ENCODE measurements at regions of chr14 and their contacts with region 1.

Region 1: GRCh38 chr14:21860172-21860571 is 186.6 kb upstream of the OR4E1 start:
- DNase-seq: peak; percentile 63
- H3K4me3 Mint-ChIP-seq: peak overlapping the region; percentile 63
- H3K27ac Mint-ChIP-seq: peak overlapping the region; percentile 67
- H3K4me1 Mint-ChIP-seq: peaks cover 12% of the 10 kb centered on the region
- H3K27me3 Mint-ChIP-seq: peaks cover 21% of the 10 kb centered on the region

Region 2: GRCh38 chr14:21802441-21802840 is 57.7 kb before region 1 on chr14:
- CTCF ChIA-PET with region 1: no interaction called
- DNase-seq: no peak
- H3K4me3 Mint-ChIP-seq: no peak overlapping the region
- H3K27ac Mint-ChIP-seq: no peak overlapping the region
- H3K4me1 Mint-ChIP-seq: no peaks in the 10 kb centered on the region
- H3K27me3 Mint-ChIP-seq: peaks cover 7% of the 10 kb centered on the region

Region 3: GRCh38 chr14:21846227-21846885 is 13.8 kb before region 1 on chr14:
- CTCF ChIA-PET with region 1: interaction called, 42 read pairs
- DNase-seq: peak; percentile 83
- H3K4me3 Mint-ChIP-seq: peak overlapping the region; percentile 75
- H3K27ac Mint-ChIP-seq: peak overlapping the region; percentile 89
- H3K4me1 Mint-ChIP-seq: peaks cover 12% of the 10 kb centered on the region
- H3K27me3 Mint-ChIP-seq: peaks cover 34% of the 10 kb centered on the region

Region 4: DNA sequence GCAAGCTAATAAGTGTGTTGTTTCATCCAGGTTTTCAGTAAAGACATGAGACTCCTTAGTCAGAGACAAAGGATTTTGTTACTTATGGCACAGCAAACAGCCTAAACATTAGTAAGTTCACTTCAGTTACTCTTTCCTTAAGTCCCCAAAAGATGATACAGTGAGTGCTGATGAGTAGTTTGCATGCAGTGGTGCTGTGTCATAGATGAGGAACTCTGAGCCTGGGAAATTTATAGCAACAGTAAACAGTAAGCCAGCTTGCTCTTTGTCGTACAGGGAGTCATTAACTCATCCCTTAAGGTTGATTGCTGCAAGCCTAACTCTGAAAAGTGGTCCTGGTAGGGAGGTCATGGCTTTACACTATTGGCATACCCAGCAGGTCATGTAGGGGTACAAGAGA is 22.1 kb after region 1 on chr14:
- CTCF ChIA-PET with region 1: no interaction called
- DNase-seq: no peak
- H3K4me3 Mint-ChIP-seq: no peak overlapping the region
- H3K27ac Mint-ChIP-seq: no peak overlapping the region
- H3K4me1 Mint-ChIP-seq: peaks cover 8% of the 10 kb centered on the region
- H3K27me3 Mint-ChIP-seq: peaks cover 22% of the 10 kb centered on the region